ENCODE measurements at regions of chrX and their contacts with region 1.

Region 1: GRCh38 chrX:19904778-19905367 is 17.5 kb upstream of the SH3KBP1 start:
- DNase-seq: peak; percentile 58 to 60
- ATAC-seq: peak; percentile 85 to 88
- H3K4me3 ChIP-seq: no peak overlapping the region
- H3K27ac ChIP-seq: no peak overlapping the region
- H3K4me1 ChIP-seq: peaks cover 6% of the 10 kb centered on the region; the same call in 2 of the 3 replicates
- CTCF ChIP-seq: peak; percentile 72
- EP300 ChIP-seq: no peak
- POLR2A ChIP-seq: no peak
- RAD21 ChIP-seq: peak; percentile 79 to 83

Region 2: GRCh38 chrX:19514791-19515614 is 389.9 kb before region 1 on chrX and contains the start of gene MAP3K15:
- CTCF ChIA-PET with region 1: no interaction called
- POLR2A ChIA-PET with region 1: no interaction called
- DNase-seq: peak; percentile 66 to 70
- ATAC-seq: peak; percentile 91 to 93
- H3K4me3 ChIP-seq: peak within 1 kb of the TSS; percentile 60
- H3K27ac ChIP-seq: peak within 1 kb of the TSS; percentile 71 to 91
- H3K4me1 ChIP-seq: peaks cover 7% of the 10 kb centered on the region; the same call in 1 of the 3 replicates
- CTCF ChIP-seq: peak; percentile 70
- EP300 ChIP-seq: no peak
- POLR2A ChIP-seq: peak; percentile 34; the same call in 1 of the 2 replicates
- RAD21 ChIP-seq: peak in 1 of 2 experiments; percentile 58; a peak in 2 of 5 replicates
- polyA plus RNA-seq, gene MAP3K15: 5.7 and 5.8 TPM in 2 replicates

Region 3: DNA sequence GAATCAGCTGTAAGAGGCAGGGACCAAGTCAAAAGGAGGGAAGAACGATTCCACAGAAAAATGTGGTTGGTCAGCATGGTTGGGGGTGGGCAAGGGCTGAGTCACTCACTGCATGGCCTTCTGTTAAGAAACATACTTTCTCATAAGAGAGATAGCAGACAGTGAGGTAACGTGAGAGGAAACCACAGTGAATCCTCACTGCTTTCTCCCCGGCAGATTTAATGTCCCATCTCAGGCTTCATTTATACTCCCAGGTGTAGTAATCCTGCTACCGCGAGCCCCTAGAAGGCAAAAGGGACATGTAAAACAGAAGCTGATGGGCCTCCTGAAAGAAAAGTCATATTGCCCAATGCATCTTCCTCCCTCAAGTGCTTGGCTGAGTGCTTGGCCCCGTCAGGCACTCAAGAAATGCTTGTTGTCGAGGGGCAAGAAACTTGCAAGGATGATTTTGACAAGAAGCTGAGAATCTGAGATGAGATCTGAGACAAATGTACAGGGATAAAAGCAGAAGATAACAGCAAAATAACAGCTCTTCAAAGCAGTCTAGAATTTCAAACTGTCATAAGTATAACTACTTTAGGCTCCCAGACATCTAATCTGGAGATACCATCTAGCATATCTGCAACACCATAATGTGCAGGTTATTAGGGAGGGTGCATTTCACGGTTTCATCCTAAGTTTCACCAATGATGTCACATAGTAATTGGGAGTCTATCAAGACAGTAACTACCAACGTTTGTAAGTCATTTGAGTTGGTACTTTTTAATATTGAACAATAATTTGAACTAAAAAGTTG is 57.7 kb before region 1 on chrX:
- CTCF ChIA-PET with region 1: no interaction called
- POLR2A ChIA-PET with region 1: no interaction called
- DNase-seq: peak; percentile 3 to 39
- ATAC-seq: peak; percentile 83 to 91
- H3K4me3 ChIP-seq: no peak overlapping the region
- H3K27ac ChIP-seq: peak overlapping the region in 1 of 2 experiments; percentile 62; a peak in 3 of 6 replicates
- H3K4me1 ChIP-seq: peaks cover 13% of the 10 kb centered on the region; the same call in 2 of the 3 replicates
- CTCF ChIP-seq: no peak
- EP300 ChIP-seq: no peak
- POLR2A ChIP-seq: no peak
- RAD21 ChIP-seq: no peak

Region 4: DNA sequence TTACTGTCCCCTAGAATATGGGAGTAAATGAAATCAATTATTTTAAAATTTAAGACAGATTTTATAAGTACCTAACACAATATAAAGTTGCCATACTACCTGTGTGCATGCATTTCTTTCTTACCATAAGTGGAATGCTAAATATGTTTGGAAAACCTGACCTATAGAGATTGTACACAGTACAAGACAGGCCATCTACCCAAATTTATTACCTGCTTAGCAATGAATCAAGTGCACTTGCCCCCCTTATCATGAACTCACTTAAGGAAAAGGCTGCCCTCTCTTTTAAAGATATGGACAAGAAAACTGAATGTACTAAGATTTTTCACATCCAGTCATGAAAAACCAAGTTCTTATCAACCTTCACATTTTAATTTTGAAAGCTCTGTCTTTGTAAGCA is 10.9 kb after region 1 on chrX:
- CTCF ChIA-PET with region 1: interaction called, 11 read pairs
- POLR2A ChIA-PET with region 1: no interaction called
- DNase-seq: no peak
- ATAC-seq: no peak
- H3K4me3 ChIP-seq: no peak overlapping the region
- H3K27ac ChIP-seq: no peak overlapping the region
- H3K4me1 ChIP-seq: no peaks in the 10 kb centered on the region
- CTCF ChIP-seq: no peak
- EP300 ChIP-seq: no peak
- POLR2A ChIP-seq: no peak
- RAD21 ChIP-seq: no peak

Region 5: GRCh38 chrX:19920970-19921369 is 16.1 kb after region 1 on chrX:
- CTCF ChIA-PET with region 1: interaction called, 11 read pairs
- POLR2A ChIA-PET with region 1: no interaction called
- DNase-seq: no peak
- ATAC-seq: no peak
- H3K4me3 ChIP-seq: no peak overlapping the region
- H3K27ac ChIP-seq: no peak overlapping the region
- H3K4me1 ChIP-seq: no peaks in the 10 kb centered on the region
- CTCF ChIP-seq: no peak
- EP300 ChIP-seq: no peak
- POLR2A ChIP-seq: no peak
- RAD21 ChIP-seq: no peak

Region 6: GRCh38 chrX:20060961-20061748 is 156.3 kb after region 1 on chrX:
- CTCF ChIA-PET with region 1: interaction called, 23 read pairs
- POLR2A ChIA-PET with region 1: no interaction called
- DNase-seq: no peak
- ATAC-seq: no peak; a peak in 1 of 6 replicates
- H3K4me3 ChIP-seq: no peak overlapping the region
- H3K27ac ChIP-seq: peak overlapping the region in 1 of 2 experiments; percentile 70; a peak in 3 of 6 replicates
- H3K4me1 ChIP-seq: peaks cover 26% of the 10 kb centered on the region
- CTCF ChIP-seq: no peak
- EP300 ChIP-seq: no peak
- POLR2A ChIP-seq: no peak
- RAD21 ChIP-seq: no peak

Region 7: GRCh38 chrX:20066968-20067708 is 162.3 kb after region 1 on chrX:
- CTCF ChIA-PET with region 1: interaction called, 23 read pairs
- POLR2A ChIA-PET with region 1: no interaction called
- DNase-seq: peak; percentile 45 to 71
- ATAC-seq: peak; percentile 86 to 87
- H3K4me3 ChIP-seq: no peak overlapping the region
- H3K27ac ChIP-seq: peak overlapping the region; percentile 55 to 81
- H3K4me1 ChIP-seq: peaks cover 22% of the 10 kb centered on the region
- CTCF ChIP-seq: peak; percentile 78
- EP300 ChIP-seq: no peak
- POLR2A ChIP-seq: no peak
- RAD21 ChIP-seq: peak; percentile 82 to 87